HepG2 (cell line): ENCODE measurements at regions of chr9 and their contacts with region 1.

Region 1: DNA sequence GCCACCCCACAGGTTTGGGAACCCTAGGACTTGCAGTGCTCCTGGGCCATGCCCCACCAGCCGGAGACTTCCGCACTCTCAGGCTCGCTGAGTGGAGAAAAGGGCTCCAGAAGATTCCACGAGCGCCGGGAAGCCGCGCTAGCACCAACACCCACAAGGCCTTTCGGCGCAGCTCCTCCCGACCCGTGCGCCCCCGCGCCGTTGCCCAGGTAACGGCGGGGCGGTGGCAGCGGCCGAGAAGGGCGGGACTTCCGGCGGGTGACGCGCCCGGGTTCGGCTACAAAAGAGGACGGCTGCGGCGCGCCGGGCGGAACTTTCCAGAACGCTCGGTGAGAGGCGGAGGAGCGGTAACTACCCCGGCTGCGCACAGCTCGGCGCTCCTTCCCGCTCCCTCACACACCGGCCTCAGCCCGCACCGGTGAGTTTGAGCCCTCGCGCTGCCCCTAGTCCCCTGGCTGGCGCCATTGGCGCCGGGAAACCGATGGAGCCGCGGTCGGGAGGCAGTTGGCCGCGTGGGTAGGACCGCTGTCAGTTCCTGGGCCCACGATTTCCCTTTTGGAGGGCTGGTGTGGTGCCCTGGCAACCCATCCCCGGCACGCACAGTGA is at the start of gene DNAJA1:
- DNase-seq: peak; percentile 82
- ATAC-seq: peak; percentile 90
- H3K4me3 ChIP-seq: peak within 1 kb of the TSS; percentile 98 to 100 (median 100)
- H3K27ac ChIP-seq: peak within 1 kb of the TSS; percentile 96
- H3K4me1 ChIP-seq: peaks cover 63% of the 10 kb centered on the region
- H3K27me3 ChIP-seq: no peaks in the 10 kb centered on the region; a peak in 2 of 5 replicates
- CTCF ChIP-seq: no peak
- EP300 ChIP-seq: no peak; a peak in 1 of 4 replicates
- POLR2A ChIP-seq: peak; percentile 99
- RAD21 ChIP-seq: peak; percentile 52; the same call in 1 of the 2 replicates
- total RNA-seq, gene DNAJA1: 306 and 476 TPM in 2 replicates

Region 2: DNA sequence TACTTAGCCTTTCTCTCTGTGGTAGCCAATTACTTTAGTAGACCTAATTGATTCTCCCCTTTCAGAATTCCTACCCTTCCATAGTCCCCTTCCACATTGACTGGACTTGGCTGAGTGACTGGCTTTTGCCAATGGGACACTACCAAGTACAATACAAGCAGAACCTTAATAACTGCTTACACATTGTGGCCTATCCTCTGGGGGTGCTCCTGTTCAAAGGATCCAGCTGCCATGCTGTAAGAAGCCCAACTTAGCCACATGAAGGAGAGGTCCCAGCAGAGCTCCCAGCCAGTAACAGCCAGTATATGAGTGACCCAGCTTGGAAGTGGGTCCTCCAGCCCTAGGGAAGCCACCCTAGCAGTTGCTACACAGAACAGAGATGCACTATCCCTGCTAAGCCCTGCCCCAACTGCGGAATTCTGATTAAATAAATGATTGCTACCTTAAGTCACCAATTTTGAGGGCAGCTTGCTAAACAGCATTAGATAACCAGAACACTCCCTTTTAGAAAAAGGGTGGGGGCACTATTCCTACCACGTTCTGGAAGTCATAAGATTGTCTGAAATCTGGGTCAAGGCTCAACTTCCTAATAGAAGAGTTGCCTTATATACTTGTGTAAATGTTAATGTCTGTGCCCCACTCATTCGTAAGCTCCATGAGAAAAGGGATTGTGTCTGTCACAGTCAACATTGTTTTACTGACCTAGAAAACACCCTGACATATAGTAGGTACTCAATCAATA is 12.6 kb before region 1 on chr9:
- CTCF ChIA-PET with region 1: no interaction called
- POLR2A ChIA-PET with region 1: interaction called, 38 read pairs
- in situ Hi-C with region 1: no loop called
- intact Hi-C with region 1: no loop called
- DNase-seq: no peak
- ATAC-seq: no peak
- H3K4me3 ChIP-seq: no peak overlapping the region
- H3K27ac ChIP-seq: no peak overlapping the region
- H3K4me1 ChIP-seq: peaks cover 17% of the 10 kb centered on the region
- H3K27me3 ChIP-seq: no peaks in the 10 kb centered on the region
- CTCF ChIP-seq: no peak
- EP300 ChIP-seq: no peak
- POLR2A ChIP-seq: no peak
- RAD21 ChIP-seq: no peak

Region 3: GRCh38 chr9:33043671-33044070 is 18.6 kb after region 1 on chr9:
- CTCF ChIA-PET with region 1: no interaction called
- POLR2A ChIA-PET with region 1: interaction called, 36 read pairs
- in situ Hi-C with region 1: no loop called
- intact Hi-C with region 1: no loop called
- DNase-seq: no peak
- ATAC-seq: no peak
- H3K4me3 ChIP-seq: 0 out of 6 replicates have a peak overlapping the region, but pooled peaks of 1 of the 3 experiments have one; percentile 12
- H3K27ac ChIP-seq: no peak overlapping the region
- H3K4me1 ChIP-seq: peaks cover 48% of the 10 kb centered on the region
- H3K27me3 ChIP-seq: no peaks in the 10 kb centered on the region
- CTCF ChIP-seq: no peak
- EP300 ChIP-seq: no peak
- POLR2A ChIP-seq: no peak
- RAD21 ChIP-seq: no peak

Region 4: GRCh38 chr9:33049680-33050361 is 24.8 kb after region 1 on chr9:
- CTCF ChIA-PET with region 1: no interaction called
- POLR2A ChIA-PET with region 1: interaction called, 36 read pairs
- in situ Hi-C with region 1: no loop called
- intact Hi-C with region 1: no loop called
- DNase-seq: no peak
- ATAC-seq: no peak
- H3K4me3 ChIP-seq: no peak overlapping the region
- H3K27ac ChIP-seq: no peak overlapping the region
- H3K4me1 ChIP-seq: peaks cover 29% of the 10 kb centered on the region
- H3K27me3 ChIP-seq: no peaks in the 10 kb centered on the region
- CTCF ChIP-seq: no peak
- EP300 ChIP-seq: no peak
- POLR2A ChIP-seq: no peak
- RAD21 ChIP-seq: no peak

Region 5: GRCh38 chr9:33076358-33077004 is 51.4 kb after region 1 on chr9 and contains the start of gene SMU1:
- CTCF ChIA-PET with region 1: no interaction called
- POLR2A ChIA-PET with region 1: interaction called, 23 read pairs
- in situ Hi-C with region 1: no loop called
- intact Hi-C with region 1: no loop called
- DNase-seq: peak; percentile 96
- ATAC-seq: peak; percentile 98
- H3K4me3 ChIP-seq: peak within 1 kb of the TSS; percentile 63 to 91 (median 90)
- H3K27ac ChIP-seq: peak within 1 kb of the TSS; percentile 87
- H3K4me1 ChIP-seq: peaks cover 33% of the 10 kb centered on the region
- H3K27me3 ChIP-seq: no peaks in the 10 kb centered on the region; a peak in 1 of 5 replicates
- CTCF ChIP-seq: peak; percentile 25; the same call in 1 of the 2 replicates
- EP300 ChIP-seq: no peak
- POLR2A ChIP-seq: peak; percentile 82 to 83
- RAD21 ChIP-seq: 0 out of 2 replicates have a peak, but pooled peaks have one; percentile 6
- total RNA-seq, gene SMU1: 36.6 and 51.5 TPM in 2 replicates